CD14-positive monocyte (primary cell): ENCODE measurements at regions of chr15 and their contacts with region 1.

Region 1: GRCh38 chr15:67109141-67110034 is 44.0 kb downstream of the SMAD3 start:
- DNase-seq: peak; percentile 95 to 98 (median 98)
- H3K4me3 ChIP-seq: peak overlapping the region in 1 of 3 experiments; percentile 18
- H3K4me3 Mint-ChIP-seq: peak overlapping the region; percentile 65 to 73
- H3K27ac ChIP-seq: peak overlapping the region; percentile 55 to 95
- H3K27ac Mint-ChIP-seq: peak overlapping the region; percentile 90 to 99 (median 96)
- H3K4me1 ChIP-seq: peaks cover 66 to 75% of the 10 kb centered on the region in 2 donors
- H3K4me1 Mint-ChIP-seq: peaks cover 14% of the 10 kb centered on the region
- H3K27me3 ChIP-seq: no peaks in the 10 kb centered on the region
- H3K27me3 Mint-ChIP-seq: peaks cover 0 to 3% (median 3%) of the 10 kb centered on the region in 3 donors
- CTCF ChIP-seq: no peak

Region 2: GRCh38 chr15:67024314-67024997 is 84.9 kb before region 1 on chr15:
- intact Hi-C with region 1: loop called in 1 of 2 experiments (anchors 5 kb)
- DNase-seq: peak; percentile 93 to 95 (median 95)
- H3K4me3 ChIP-seq: peak overlapping the region in 2 of 3 experiments; percentile 11 to 54
- H3K4me3 Mint-ChIP-seq: peak overlapping the region; percentile 47 to 70
- H3K27ac ChIP-seq: peak overlapping the region; percentile 84 to 97
- H3K27ac Mint-ChIP-seq: peak overlapping the region; percentile 94 to 99 (median 99)
- H3K4me1 ChIP-seq: peaks cover 74 to 81% of the 10 kb centered on the region in 2 donors
- H3K4me1 Mint-ChIP-seq: peaks cover 77% of the 10 kb centered on the region
- H3K27me3 ChIP-seq: no peaks in the 10 kb centered on the region
- H3K27me3 Mint-ChIP-seq: peaks cover 0 to 2% (median 0%) of the 10 kb centered on the region in 3 donors
- CTCF ChIP-seq: no peak

Region 3: GRCh38 chr15:67091071-67091979 is 18.1 kb before region 1 on chr15:
- intact Hi-C with region 1: loop called in 1 of 2 experiments (anchors 2 kb)
- DNase-seq: peak; percentile 96 to 98 (median 98)
- H3K4me3 ChIP-seq: peak overlapping the region in 1 of 3 experiments; percentile 46
- H3K4me3 Mint-ChIP-seq: peak overlapping the region; percentile 64 to 65
- H3K27ac ChIP-seq: peak overlapping the region; percentile 73 to 98
- H3K27ac Mint-ChIP-seq: peak overlapping the region; percentile 95 to 99 (median 98)
- H3K4me1 ChIP-seq: peaks cover 76 to 89% of the 10 kb centered on the region in 2 donors
- H3K4me1 Mint-ChIP-seq: peaks cover 97% of the 10 kb centered on the region
- H3K27me3 ChIP-seq: no peaks in the 10 kb centered on the region
- H3K27me3 Mint-ChIP-seq: peaks cover 0 to 4% (median 2%) of the 10 kb centered on the region in 3 donors
- CTCF ChIP-seq: no peak

Region 4: GRCh38 chr15:67120839-67121643 is 11.7 kb after region 1 on chr15:
- intact Hi-C with region 1: loop called in 1 of 2 experiments (anchors 2 kb)
- DNase-seq: peak; percentile 96 to 99 (median 98)
- H3K4me3 ChIP-seq: no peak overlapping the region
- H3K4me3 Mint-ChIP-seq: peak overlapping the region; percentile 72 to 75
- H3K27ac ChIP-seq: peak overlapping the region; percentile 92 to 94
- H3K27ac Mint-ChIP-seq: peak overlapping the region; percentile 97 to 99 (median 98)
- H3K4me1 ChIP-seq: peaks cover 70 to 76% of the 10 kb centered on the region in 2 donors
- H3K4me1 Mint-ChIP-seq: peaks cover 87% of the 10 kb centered on the region
- H3K27me3 ChIP-seq: no peaks in the 10 kb centered on the region
- H3K27me3 Mint-ChIP-seq: peaks cover 0 to 3% (median 0%) of the 10 kb centered on the region in 3 donors
- CTCF ChIP-seq: no peak

Region 5: DNA sequence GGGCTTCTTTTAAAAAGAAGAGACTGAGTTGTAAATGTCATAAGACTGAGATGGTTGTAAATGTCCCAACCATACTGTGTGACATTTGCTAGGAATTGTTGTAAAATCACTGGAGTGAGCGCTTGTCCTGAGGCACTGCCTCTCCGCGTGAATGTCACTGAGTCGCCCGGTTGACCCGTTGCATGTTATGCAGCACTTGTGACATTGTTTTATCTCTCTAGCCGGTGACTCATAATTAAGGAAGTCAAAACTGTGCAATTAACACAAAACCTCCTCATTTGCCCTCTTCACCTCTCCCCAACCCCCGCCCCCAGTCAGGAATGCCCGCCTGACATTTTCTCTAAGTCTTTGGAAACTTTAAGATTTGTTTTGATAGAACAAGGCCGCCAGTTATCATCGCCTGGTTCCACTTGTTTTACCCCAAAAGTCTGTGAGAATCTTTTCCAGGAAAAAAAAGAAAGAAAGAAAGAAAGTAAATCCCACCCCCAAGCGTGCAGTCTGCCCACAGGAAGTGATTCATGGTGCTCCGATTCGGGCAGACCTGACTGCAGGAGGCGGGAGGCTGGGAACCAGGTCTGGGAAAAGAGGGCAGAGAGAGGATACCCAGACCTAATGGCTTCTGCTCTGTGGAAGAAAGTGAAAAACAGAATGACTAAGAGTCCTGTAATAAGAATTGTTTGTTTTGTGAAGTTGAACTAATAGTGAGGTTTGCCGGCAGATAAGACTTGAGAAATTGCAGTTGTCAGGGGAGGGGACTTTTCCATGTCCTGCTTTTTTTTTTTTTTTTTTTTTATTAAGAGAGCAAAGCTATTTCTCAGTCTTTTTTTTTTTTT is 40.9 kb after region 1 on chr15:
- intact Hi-C with region 1: loop called (anchors 5 kb)
- DNase-seq: peak; percentile 90 to 96 (median 94)
- H3K4me3 ChIP-seq: peak overlapping the region in 2 of 3 experiments; percentile 2 to 31
- H3K4me3 Mint-ChIP-seq: peak overlapping the region; percentile 69 to 82
- H3K27ac ChIP-seq: peak overlapping the region; percentile 67 to 93
- H3K27ac Mint-ChIP-seq: peak overlapping the region; percentile 94 to 99 (median 98)
- H3K4me1 ChIP-seq: peaks cover 57 to 58% of the 10 kb centered on the region in 2 donors
- H3K4me1 Mint-ChIP-seq: peaks cover 67% of the 10 kb centered on the region
- H3K27me3 ChIP-seq: no peaks in the 10 kb centered on the region
- H3K27me3 Mint-ChIP-seq: peaks cover 0 to 2% (median 0%) of the 10 kb centered on the region in 3 donors
- CTCF ChIP-seq: no peak